ENCODE measurements at regions of chr7 and their contacts with region 1.

Region 1: GRCh38 chr7:140003913-140004382 is 58.8 kb downstream of the PARP12 start:
- DNase-seq: no peak
- ATAC-seq: peak in 1 of 2 donors; percentile 23
- H3K4me3 ChIP-seq: no peak overlapping the region
- H3K27ac ChIP-seq: no peak overlapping the region
- H3K4me1 ChIP-seq: no peaks in the 10 kb centered on the region
- H3K27me3 ChIP-seq: no peaks in the 10 kb centered on the region

Region 2: GRCh38 chr7:139494835-139495579 is 508.9 kb before region 1 on chr7:
- intact Hi-C with region 1: loop called in 3 of 4 experiments (anchors 5 kb)
- DNase-seq: no peak
- ATAC-seq: no peak
- H3K4me3 ChIP-seq: no peak overlapping the region
- H3K27ac ChIP-seq: no peak overlapping the region
- H3K4me1 ChIP-seq: no peaks in the 10 kb centered on the region
- H3K27me3 ChIP-seq: no peaks in the 10 kb centered on the region

Region 3: DNA sequence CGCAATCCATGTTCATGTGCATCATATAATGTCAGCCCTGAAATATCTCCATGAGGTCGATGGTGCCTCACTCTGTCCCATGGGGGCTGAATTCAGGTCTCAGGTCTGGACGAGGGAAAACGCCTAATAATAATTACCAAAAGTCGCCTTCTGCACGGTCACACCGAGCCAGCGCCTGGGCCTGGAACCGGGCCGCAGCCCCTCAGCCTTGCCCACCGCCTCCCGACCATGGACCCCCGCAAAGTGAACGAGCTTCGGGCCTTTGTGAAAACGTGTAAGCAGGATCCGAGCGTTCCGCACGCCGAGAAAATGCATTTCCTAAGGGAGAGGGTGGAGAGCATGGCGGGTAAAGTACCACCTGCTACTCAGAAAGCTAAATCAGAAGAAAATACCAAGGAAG is 501.7 kb before region 1 on chr7:
- intact Hi-C with region 1: loop called in 3 of 4 experiments (anchors 5 kb)
- DNase-seq: no peak
- ATAC-seq: no peak
- H3K4me3 ChIP-seq: no peak overlapping the region
- H3K27ac ChIP-seq: no peak overlapping the region
- H3K4me1 ChIP-seq: no peaks in the 10 kb centered on the region
- H3K27me3 ChIP-seq: no peaks in the 10 kb centered on the region

Region 4: DNA sequence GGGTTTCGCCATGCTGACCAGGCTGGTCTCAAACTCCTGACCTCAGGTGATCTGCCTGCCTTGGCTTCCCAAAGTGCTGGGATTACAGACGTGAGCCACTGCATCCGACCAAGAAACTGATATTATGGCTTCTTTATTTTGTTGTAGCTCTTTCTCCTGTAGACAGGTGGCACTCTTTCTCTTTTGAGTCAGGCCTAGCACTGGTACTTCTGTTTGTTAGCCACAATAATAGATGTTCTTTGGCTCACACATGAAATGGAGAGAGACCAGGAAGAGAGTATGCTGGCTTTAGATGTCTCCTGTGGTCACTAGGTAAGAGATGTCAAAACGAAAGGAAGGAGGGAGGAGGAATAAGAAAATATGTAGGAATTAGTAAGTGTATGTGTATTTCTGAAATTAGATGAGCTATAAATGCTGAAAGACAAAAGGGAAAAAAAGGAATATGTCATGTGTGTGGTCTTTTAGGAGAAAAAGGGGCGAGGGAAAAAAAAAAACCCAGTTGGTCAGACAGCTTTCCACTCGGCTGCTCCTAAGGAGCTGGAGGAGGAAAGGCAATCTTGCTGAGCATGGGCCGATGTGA is 401.7 kb before region 1 on chr7:
- intact Hi-C with region 1: loop called in 1 of 4 experiments (anchors 5 kb)
- DNase-seq: no peak
- ATAC-seq: peak; percentile 46 to 57
- H3K4me3 ChIP-seq: no peak overlapping the region
- H3K27ac ChIP-seq: no peak overlapping the region
- H3K4me1 ChIP-seq: peaks cover 3% of the 10 kb centered on the region
- H3K27me3 ChIP-seq: no peaks in the 10 kb centered on the region

Region 5: DNA sequence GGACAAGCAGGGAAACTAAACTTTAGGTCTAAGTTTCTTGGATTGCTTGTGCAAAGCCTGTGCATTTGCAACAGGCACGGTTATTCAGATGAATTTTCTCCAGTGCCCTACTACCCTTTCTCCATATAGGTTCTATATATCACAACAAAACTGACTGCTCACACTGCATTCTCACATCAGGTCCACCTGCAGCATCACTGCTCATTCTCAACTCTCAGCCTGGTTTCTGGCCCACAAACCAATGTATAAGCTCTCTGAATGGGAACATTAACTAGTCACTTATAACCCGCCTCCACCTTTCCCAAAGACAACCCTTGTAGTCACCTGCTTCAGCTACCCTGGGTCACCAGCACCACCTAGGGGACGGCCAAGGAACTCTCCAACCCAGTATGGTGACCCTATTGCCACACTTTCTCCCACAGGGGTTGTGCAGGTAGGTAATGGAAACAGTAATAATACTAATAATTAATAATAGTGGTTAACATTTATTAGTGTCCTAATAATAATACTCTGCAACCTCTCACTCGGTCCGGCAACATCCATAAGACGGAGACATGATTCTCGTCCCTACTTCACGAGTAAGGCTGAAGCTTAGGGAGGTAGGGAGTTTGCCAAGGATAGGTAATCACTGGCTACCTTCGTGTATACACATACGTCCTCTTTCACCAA is 383.1 kb before region 1 on chr7:
- intact Hi-C with region 1: loop called in 3 of 4 experiments (anchors 5 to 10 kb)
- DNase-seq: no peak
- ATAC-seq: no peak
- H3K4me3 ChIP-seq: no peak overlapping the region
- H3K27ac ChIP-seq: no peak overlapping the region
- H3K4me1 ChIP-seq: no peaks in the 10 kb centered on the region
- H3K27me3 ChIP-seq: no peaks in the 10 kb centered on the region

Region 6: GRCh38 chr7:139645572-139646523 is 358.1 kb before region 1 on chr7:
- intact Hi-C with region 1: loop called in 3 of 4 experiments (anchors 2 to 10 kb)
- DNase-seq: peak; percentile 83 to 89 (median 85)
- ATAC-seq: peak; percentile 47 to 69
- H3K4me3 ChIP-seq: no peak overlapping the region
- H3K27ac ChIP-seq: peak overlapping the region; percentile 13
- H3K4me1 ChIP-seq: peaks cover 10% of the 10 kb centered on the region
- H3K27me3 ChIP-seq: no peaks in the 10 kb centered on the region

Region 7: GRCh38 chr7:139725077-139725476 is 278.9 kb before region 1 on chr7:
- intact Hi-C with region 1: no loop called
- DNase-seq: peak in 1 of 3 donors; percentile 6
- ATAC-seq: no peak
- H3K4me3 ChIP-seq: no peak overlapping the region
- H3K27ac ChIP-seq: peak overlapping the region; percentile 48
- H3K4me1 ChIP-seq: peaks cover 30% of the 10 kb centered on the region
- H3K27me3 ChIP-seq: no peaks in the 10 kb centered on the region

Region 8: GRCh38 chr7:139777948-139778841 is 225.8 kb before region 1 on chr7 and contains the start of gene HIPK2:
- intact Hi-C with region 1: loop called in 3 of 4 experiments (anchors 5 to 10 kb)
- DNase-seq: peak; percentile 87 to 94 (median 93)
- ATAC-seq: peak; percentile 84 to 88
- H3K4me3 ChIP-seq: peak within 1 kb of the TSS; percentile 100
- H3K27ac ChIP-seq: peak within 1 kb of the TSS; percentile 99
- H3K4me1 ChIP-seq: peaks cover 3% of the 10 kb centered on the region
- H3K27me3 ChIP-seq: no peaks in the 10 kb centered on the region
- total RNA-seq, gene HIPK2: 92.6 to 131 (median 113) TPM

Measured in right cardiac atrium (tissue), 5 donors.